Psoas muscle (tissue), 8 donors: ENCODE measurements at regions of chr14 and their contacts with region 1.

Region 1: GRCh38 chr14:94036313-94037050 is 10.3 kb downstream of the OTUB2 start:
- DNase-seq: peak; percentile 67 to 83
- ATAC-seq: peak; percentile 90 to 97 (median 94)
- H3K4me3 ChIP-seq: no peak overlapping the region
- H3K27ac ChIP-seq: no peak overlapping the region
- H3K4me1 ChIP-seq: peaks cover 1% of the 10 kb centered on the region
- H3K27me3 ChIP-seq: no peaks in the 10 kb centered on the region
- CTCF ChIP-seq: peak; percentile 86

Region 2: GRCh38 chr14:94056579-94057308 is 20.3 kb after region 1 on chr14:
- intact Hi-C with region 1: no loop called
- DNase-seq: no peak
- ATAC-seq: no peak
- H3K4me3 ChIP-seq: no peak overlapping the region
- H3K27ac ChIP-seq: peak overlapping the region; percentile 10
- H3K4me1 ChIP-seq: peaks cover 30% of the 10 kb centered on the region
- H3K27me3 ChIP-seq: no peaks in the 10 kb centered on the region
- CTCF ChIP-seq: no peak

Region 3: DNA sequence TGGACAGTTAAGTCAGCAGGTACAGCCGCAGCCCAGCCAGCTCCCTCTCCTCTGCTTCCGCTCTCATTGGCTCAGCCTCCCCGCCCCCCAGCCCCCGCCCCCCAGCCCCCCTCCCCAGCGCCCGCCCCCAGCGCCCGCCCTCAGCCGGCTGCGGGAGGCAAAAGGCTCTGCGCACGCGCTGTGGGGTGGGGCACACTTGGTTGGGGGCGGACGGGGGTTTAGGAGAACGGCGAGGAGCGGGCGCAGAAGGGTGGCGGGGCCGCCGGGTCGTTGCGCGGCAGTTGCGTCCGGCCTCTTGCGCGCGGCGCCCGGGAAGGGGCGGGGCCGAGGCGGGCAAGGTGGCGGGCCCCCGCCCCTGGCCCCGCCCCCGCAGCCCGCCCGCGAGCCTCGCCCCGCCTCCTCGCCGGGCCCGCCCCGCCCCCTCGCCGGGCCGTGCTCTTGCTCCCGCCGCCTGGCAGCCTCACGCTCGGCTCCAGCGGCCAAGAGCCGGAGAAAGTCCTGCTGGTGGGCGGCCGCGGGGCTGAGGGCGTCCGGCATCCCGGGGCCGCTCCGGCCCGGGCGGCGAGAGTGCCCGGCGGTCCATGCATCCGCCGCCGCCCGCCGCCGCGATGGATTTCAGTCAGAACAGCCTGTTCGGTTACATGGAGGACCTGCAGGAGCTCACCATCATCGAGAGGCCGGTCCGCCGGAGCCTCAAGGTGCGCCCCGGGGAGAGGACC is 137.6 kb after region 1 on chr14 and contains the start of gene PPP4R4:
- intact Hi-C with region 1: loop called in 1 of 2 experiments (anchors 5 kb)
- DNase-seq: peak; percentile 80 to 87
- ATAC-seq: peak; percentile 82 to 92 (median 86)
- H3K4me3 ChIP-seq: peak within 1 kb of the TSS; percentile 80
- H3K27ac ChIP-seq: peak within 1 kb of the TSS; percentile 67
- H3K4me1 ChIP-seq: peaks cover 20% of the 10 kb centered on the region
- H3K27me3 ChIP-seq: peaks cover 0 to 36% (median 3%) of the 10 kb centered on the region in 3 donors
- CTCF ChIP-seq: no peak
- total RNA-seq, gene PPP4R4: 0.13 to 0.73 (median 0.49) TPM in 3 of 4 donors, not detected in the other

Region 4: GRCh38 chr14:94239406-94239805 is 202.9 kb after region 1 on chr14:
- intact Hi-C with region 1: no loop called
- DNase-seq: no peak
- ATAC-seq: no peak
- H3K4me3 ChIP-seq: no peak overlapping the region
- H3K27ac ChIP-seq: no peak overlapping the region
- H3K4me1 ChIP-seq: no peaks in the 10 kb centered on the region
- H3K27me3 ChIP-seq: no peaks in the 10 kb centered on the region
- CTCF ChIP-seq: no peak